Dorsolateral prefrontal cortex (tissue), 120 donors: ENCODE measurements at regions of chr4 and their contacts with region 1.

Region 1: GRCh38 chr4:104279744-104280143 is 214.9 kb downstream of the CXXC4 start:
- DNase-seq: no peak
- H3K4me3 ChIP-seq: peak overlapping the region in 24 of 59 donors; percentile 1 to 50 (median 30)
- H3K27ac ChIP-seq: peak overlapping the region; percentile 33 to 98 (median 93)
- H3K27me3 ChIP-seq: no peaks in the 10 kb centered on the region
- CTCF ChIP-seq: peak in 6 of 56 donors; percentile 7 to 33 (median 18)

Region 2: DNA sequence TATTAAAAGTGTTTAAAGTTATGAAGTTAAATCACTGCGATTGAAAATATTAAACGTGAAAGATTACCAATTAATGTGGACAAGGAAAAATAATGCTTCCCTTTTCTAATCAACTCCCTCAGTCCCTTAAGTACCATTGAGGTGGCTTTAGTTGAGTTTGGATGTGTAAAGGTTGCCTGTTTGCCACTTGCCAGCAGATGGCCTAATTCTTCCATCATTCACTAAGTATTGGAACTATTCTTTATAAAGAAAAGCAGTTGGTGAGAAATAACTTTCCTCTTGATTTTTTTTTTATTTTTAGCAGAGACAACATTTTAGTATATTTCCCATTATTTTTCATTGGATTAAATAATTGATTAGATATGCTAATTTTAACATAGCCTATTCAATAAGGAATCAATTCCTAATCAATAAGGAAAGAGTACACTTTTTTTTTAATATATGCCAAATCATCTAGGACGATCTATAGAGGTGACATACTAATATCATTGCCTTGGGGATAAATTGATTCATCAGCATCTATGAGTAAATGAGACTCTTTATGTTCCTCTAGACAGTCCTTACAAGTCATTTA is 264.0 kb before region 1 on chr4:
- intact Hi-C with region 1: loop called in 1 of 2 experiments (anchors 10 kb)
- DNase-seq: peak in 1 of 10 donors; percentile 49
- H3K4me3 ChIP-seq: no peak overlapping the region
- H3K27ac ChIP-seq: no peak overlapping the region
- H3K27me3 ChIP-seq: no peaks in the 10 kb centered on the region
- CTCF ChIP-seq: peak; percentile 21 to 84 (median 66)

Region 3: GRCh38 chr4:104093247-104093646 is 186.5 kb before region 1 on chr4:
- intact Hi-C with region 1: no loop called
- DNase-seq: no peak
- H3K4me3 ChIP-seq: no peak overlapping the region
- H3K27ac ChIP-seq: no peak overlapping the region
- H3K27me3 ChIP-seq: no peaks in the 10 kb centered on the region
- CTCF ChIP-seq: no peak

Region 4: GRCh38 chr4:104334410-104334809 is 54.7 kb after region 1 on chr4:
- intact Hi-C with region 1: no loop called
- DNase-seq: no peak
- H3K4me3 ChIP-seq: no peak overlapping the region
- H3K27ac ChIP-seq: no peak overlapping the region
- H3K27me3 ChIP-seq: no peaks in the 10 kb centered on the region
- CTCF ChIP-seq: no peak

Region 5: GRCh38 chr4:104451573-104451972 is 171.8 kb after region 1 on chr4:
- intact Hi-C with region 1: no loop called
- DNase-seq: no peak
- H3K4me3 ChIP-seq: peak overlapping the region in 13 of 59 donors; percentile 4 to 39 (median 19)
- H3K27ac ChIP-seq: peak overlapping the region in 8 of 59 donors; percentile 2 to 44 (median 20)
- H3K27me3 ChIP-seq: no peaks in the 10 kb centered on the region
- CTCF ChIP-seq: peak in 55 of 56 donors; percentile 21 to 77 (median 57)